Motor neuron (in vitro differentiated cells): ENCODE measurements at regions of chr12 and their contacts with region 1.

Region 1: DNA sequence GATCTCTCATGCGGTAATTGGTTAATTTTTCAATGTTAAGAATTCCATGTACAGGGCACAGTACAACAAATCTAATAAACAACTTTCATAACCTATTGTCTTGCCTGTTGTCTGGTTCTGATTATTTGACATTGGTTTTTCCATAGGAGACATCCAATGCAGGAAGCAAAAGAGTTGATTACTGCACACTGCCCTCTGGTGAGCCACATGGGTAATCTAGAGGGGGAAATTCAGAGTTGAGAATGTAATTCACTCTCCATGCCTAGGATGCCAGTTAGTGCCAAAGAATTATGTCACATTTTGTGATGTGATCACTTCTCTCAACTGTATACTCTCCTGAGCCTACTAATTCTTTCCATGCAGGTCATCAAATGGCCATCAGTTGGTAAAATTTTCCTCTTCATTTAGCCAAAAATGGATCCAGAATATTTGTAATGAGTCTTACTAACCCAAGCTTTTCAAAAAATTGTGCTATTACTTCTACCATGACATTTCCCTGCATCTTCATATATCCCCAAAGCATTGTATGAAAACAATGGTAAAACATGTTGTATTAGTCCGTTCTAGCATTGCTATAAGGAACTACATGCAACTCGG is 17.7 kb upstream of the CCDC91 start:
- ATAC-seq: peak in 4 of 8 experiments; percentile 63 to 89 (median 74)
- H3K4me3 ChIP-seq: no peak overlapping the region
- H3K27ac ChIP-seq: no peak overlapping the region
- H3K4me1 ChIP-seq: no peaks in the 10 kb centered on the region

Region 2: DNA sequence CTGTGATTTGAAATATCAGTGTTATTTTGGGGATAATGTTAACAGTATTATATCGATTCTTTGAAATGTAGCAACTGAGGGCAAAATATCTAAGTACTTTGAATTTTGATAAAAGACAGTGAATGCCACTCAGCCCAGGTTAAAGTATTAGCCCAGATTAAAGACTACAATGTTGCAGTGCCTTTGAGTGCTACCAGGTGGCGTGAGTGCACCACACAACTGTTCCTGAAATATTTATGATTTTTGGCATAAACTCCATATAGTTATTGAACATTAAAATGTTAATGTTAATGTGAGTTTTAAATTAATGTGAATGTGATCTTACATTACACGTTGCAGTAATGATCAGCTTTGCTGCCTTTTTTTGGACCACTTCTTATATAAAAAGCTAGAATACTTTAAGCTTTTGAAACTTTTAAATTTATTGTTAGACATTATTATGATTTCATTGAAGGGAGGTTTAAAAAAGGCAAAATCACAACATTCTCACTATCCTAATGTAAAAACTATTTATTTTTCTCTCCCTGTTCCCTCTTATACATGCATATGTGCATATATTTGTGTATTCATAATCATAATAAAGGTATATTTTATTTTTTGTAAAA is 439.4 kb before region 1 on chr12:
- in situ Hi-C with region 1: loop called in 1 of 9 experiments (anchors 25 kb)
- ATAC-seq: peak in 2 of 8 experiments; percentile 34 to 57
- H3K4me3 ChIP-seq: no peak overlapping the region
- H3K27ac ChIP-seq: no peak overlapping the region
- H3K4me1 ChIP-seq: no peaks in the 10 kb centered on the region

Region 3: GRCh38 chr12:27969624-27970400 is 202.7 kb before region 1 on chr12:
- in situ Hi-C with region 1: loop called in 1 of 9 experiments (anchors 10 kb)
- ATAC-seq: peak; percentile 39 to 85 (median 79)
- H3K4me3 ChIP-seq: peak overlapping the region; percentile 36 to 52 (median 50)
- H3K27ac ChIP-seq: no peak overlapping the region
- H3K4me1 ChIP-seq: peaks cover 3 to 10% of the 10 kb centered on the region in 2 donors

Region 4: GRCh38 chr12:28253161-28253641 is 80.7 kb after region 1 on chr12:
- in situ Hi-C with region 1: no loop called
- ATAC-seq: no peak
- H3K4me3 ChIP-seq: no peak overlapping the region
- H3K27ac ChIP-seq: no peak overlapping the region
- H3K4me1 ChIP-seq: no peaks in the 10 kb centered on the region

Region 5: GRCh38 chr12:28390761-28391385 is 218.3 kb after region 1 on chr12:
- in situ Hi-C with region 1: no loop called
- ATAC-seq: no peak
- H3K4me3 ChIP-seq: no peak overlapping the region
- H3K27ac ChIP-seq: no peak overlapping the region
- H3K4me1 ChIP-seq: no peaks in the 10 kb centered on the region